ENCODE measurements at regions of chr7 and their contacts with region 1.

Region 1: GRCh38 chr7:121395961-121396757 is at the start of gene FAM3C:
- DNase-seq: peak; percentile 85
- H3K4me3 Mint-ChIP-seq: peak within 1 kb of the TSS; percentile 82
- H3K27ac Mint-ChIP-seq: peak within 1 kb of the TSS; percentile 88
- H3K4me1 Mint-ChIP-seq: peaks cover 33% of the 10 kb centered on the region
- H3K27me3 Mint-ChIP-seq: no peaks in the 10 kb centered on the region
- total RNA-seq, gene FAM3C: 11.5 to 13.9 TPM

Region 2: DNA sequence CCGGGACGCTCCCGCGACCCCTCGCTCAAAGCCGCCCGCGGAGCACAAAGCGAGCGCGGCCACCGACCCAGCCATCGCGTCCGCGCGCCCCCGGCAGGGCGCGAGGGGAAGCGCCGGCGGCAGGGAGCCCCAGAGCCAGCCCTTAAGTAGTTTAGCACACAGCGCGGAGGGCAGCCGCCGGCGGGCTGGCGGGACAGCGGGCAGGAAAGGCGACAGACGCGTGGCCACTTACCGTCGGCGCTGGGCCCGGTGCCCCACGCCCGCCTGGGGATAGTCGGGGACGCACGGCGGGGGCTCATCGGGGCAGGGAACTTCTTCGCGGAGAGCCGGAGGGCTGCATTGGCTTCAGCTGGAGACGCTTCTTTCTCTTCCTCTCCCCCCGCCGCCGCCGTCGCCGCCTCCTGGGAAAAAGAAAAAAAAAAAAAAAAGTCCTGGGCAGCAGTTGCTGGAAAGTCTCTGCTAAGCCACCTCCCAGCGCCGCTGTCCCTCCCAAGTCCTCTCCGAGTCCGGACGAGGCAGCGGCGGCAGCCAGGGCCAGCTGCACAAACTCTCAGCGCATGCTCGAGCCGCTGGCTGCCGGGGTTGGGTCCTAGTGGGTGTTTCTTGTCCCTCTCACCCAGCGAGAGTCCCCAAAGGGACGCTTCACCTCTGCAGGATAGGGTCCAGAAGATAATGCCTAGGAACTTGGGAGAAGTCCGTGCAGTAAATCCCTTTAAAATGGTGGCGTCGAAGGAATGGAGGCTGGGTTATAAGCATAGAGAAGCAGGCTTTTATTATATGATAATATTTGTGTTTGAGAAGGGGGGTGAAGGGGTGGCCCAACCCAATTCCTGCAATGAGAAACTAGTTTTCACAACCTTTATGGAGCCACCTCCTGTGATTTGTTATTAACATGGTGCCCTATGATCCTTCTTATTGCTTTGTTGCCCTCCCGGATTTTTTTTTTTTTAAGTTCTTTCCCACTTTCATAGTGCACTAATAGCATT is 538.3 kb before region 1 on chr7 and contains the start of gene TSPAN12:
- CTCF ChIA-PET with region 1: no interaction called
- intact Hi-C with region 1: loop called (anchors 1 kb)
- DNase-seq: peak; percentile 59
- H3K4me3 Mint-ChIP-seq: peak within 1 kb of the TSS; percentile 79
- H3K27ac Mint-ChIP-seq: no peak within 1 kb of the TSS
- H3K4me1 Mint-ChIP-seq: peaks cover 11% of the 10 kb centered on the region
- H3K27me3 Mint-ChIP-seq: peaks cover 56% of the 10 kb centered on the region
- total RNA-seq, gene TSPAN12: not detected

Region 3: DNA sequence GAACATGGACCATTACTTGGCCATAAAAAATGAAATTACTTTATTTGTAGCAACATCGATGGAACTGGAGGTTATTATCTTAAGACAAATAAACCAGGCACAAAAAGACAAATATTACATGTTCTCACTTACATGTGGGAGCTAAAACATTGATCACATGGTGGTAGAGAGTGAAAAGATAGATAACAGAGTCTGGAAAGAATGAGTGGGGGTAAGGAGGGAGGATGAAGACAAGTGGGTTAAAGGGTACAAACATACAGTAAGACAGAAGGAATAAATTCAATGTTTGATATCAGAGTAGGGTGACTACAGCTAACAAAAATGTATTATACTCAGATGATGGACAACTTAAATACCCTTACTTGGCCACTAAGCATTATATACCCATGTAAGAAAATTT is 167.4 kb before region 1 on chr7:
- CTCF ChIA-PET with region 1: no interaction called
- intact Hi-C with region 1: no loop called
- DNase-seq: no peak
- H3K4me3 Mint-ChIP-seq: no peak overlapping the region
- H3K27ac Mint-ChIP-seq: no peak overlapping the region
- H3K4me1 Mint-ChIP-seq: no peaks in the 10 kb centered on the region
- H3K27me3 Mint-ChIP-seq: peaks cover 6% of the 10 kb centered on the region

Region 4: GRCh38 chr7:121366852-121367431 is 29.2 kb before region 1 on chr7:
- CTCF ChIA-PET with region 1: interaction called, 29 read pairs
- intact Hi-C with region 1: loop called (anchors 1 kb)
- DNase-seq: peak; percentile 43
- H3K4me3 Mint-ChIP-seq: no peak overlapping the region
- H3K27ac Mint-ChIP-seq: no peak overlapping the region
- H3K4me1 Mint-ChIP-seq: peaks cover 13% of the 10 kb centered on the region
- H3K27me3 Mint-ChIP-seq: no peaks in the 10 kb centered on the region

Region 5: DNA sequence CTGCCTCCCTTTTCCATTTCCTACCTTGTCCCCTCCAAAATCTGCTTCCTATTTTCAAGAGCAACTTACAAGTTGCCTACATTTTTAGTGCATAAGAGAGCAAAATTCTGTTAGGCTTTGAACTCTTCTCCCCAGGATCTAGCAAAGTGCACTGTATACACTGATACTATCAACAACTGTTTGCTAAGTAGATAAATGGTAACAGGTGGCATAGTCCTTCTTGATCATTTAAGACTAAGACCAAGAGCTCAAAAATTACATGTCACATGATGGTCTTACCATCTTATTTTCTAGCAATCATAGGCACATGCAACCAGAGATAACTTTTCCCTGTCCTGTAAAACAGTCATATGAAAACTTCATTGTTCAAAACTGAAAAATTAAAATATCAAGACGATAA is 16.2 kb before region 1 on chr7:
- CTCF ChIA-PET with region 1: interaction called, 42 read pairs
- intact Hi-C with region 1: loop called (anchors 1 kb)
- DNase-seq: no peak
- H3K4me3 Mint-ChIP-seq: no peak overlapping the region
- H3K27ac Mint-ChIP-seq: no peak overlapping the region
- H3K4me1 Mint-ChIP-seq: peaks cover 31% of the 10 kb centered on the region
- H3K27me3 Mint-ChIP-seq: no peaks in the 10 kb centered on the region

Region 6: GRCh38 chr7:121437456-121438127 is 41.4 kb after region 1 on chr7:
- CTCF ChIA-PET with region 1: interaction called, 8 read pairs
- intact Hi-C with region 1: loop called (anchors 1 kb)
- DNase-seq: no peak
- H3K4me3 Mint-ChIP-seq: no peak overlapping the region
- H3K27ac Mint-ChIP-seq: no peak overlapping the region
- H3K4me1 Mint-ChIP-seq: peaks cover 22% of the 10 kb centered on the region
- H3K27me3 Mint-ChIP-seq: no peaks in the 10 kb centered on the region